Activated T-helper 2 cell treated with anti-CD3 and anti-CD28 coated beads, Interferon-gamma antibody, Interleukin-2, Interleukin-4, amounts not matched to agents 10 μg/mL and 5 μg/mL and 100 μg/mL, durations not matched to agents 14 hours and 24 hours and 36 hours (primary cell): ENCODE measurements at regions of chr15 and their contacts with region 1.

Region 1: GRCh38 chr15:69713726-69714559 is 261.3 kb downstream of the RPLP1 start:
- DNase-seq: peak; percentile 83
- H3K4me3 Mint-ChIP-seq: no peak overlapping the region
- H3K27ac Mint-ChIP-seq: peak overlapping the region; percentile 68
- H3K4me1 Mint-ChIP-seq: peaks cover 59% of the 10 kb centered on the region
- H3K27me3 Mint-ChIP-seq: peaks cover 5% of the 10 kb centered on the region

Region 2: GRCh38 chr15:69468241-69469121 is 245.5 kb before region 1 on chr15:
- intact Hi-C with region 1: loop called (anchors 1 kb)
- DNase-seq: peak; percentile 78
- H3K4me3 Mint-ChIP-seq: peak overlapping the region; percentile 5
- H3K27ac Mint-ChIP-seq: peak overlapping the region; percentile 75
- H3K4me1 Mint-ChIP-seq: peaks cover 22% of the 10 kb centered on the region
- H3K27me3 Mint-ChIP-seq: peaks cover 30% of the 10 kb centered on the region

Region 3: GRCh38 chr15:69679623-69680228 is 34.2 kb before region 1 on chr15:
- intact Hi-C with region 1: loop called (anchors 5 kb)
- DNase-seq: peak; percentile 23
- H3K4me3 Mint-ChIP-seq: no peak overlapping the region
- H3K27ac Mint-ChIP-seq: peak overlapping the region; percentile 38
- H3K4me1 Mint-ChIP-seq: peaks cover 32% of the 10 kb centered on the region
- H3K27me3 Mint-ChIP-seq: peaks cover 19% of the 10 kb centered on the region

Region 4: DNA sequence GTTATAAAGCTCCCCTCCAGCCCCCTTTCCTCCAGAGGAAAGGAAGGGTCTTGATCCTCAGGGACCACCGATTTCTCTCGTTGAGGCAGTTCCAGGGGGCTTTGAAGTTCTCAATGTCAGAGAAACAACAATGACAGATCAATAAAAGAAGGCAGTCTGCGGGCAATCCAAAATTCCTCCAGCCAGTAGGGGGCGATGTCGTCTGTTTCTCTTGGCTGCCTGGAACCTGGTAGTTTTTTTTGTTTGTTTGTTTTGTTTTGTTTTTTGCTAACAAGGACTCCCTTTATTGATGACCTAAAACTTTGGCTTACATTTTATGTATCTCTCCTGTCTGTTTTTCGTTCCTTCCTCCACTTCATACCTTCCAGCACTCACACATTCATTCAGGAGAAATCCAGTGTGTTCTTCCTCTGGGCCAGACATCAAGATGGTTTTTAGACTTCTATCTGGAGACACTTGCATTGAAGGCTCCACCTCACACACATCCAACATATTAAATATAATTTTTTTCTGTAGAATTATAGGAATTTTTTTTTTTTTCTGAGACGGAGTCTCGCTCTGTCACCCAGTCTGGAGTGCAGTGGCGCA is 15.3 kb after region 1 on chr15:
- intact Hi-C with region 1: no loop called
- DNase-seq: peak; percentile 51
- H3K4me3 Mint-ChIP-seq: no peak overlapping the region
- H3K27ac Mint-ChIP-seq: no peak overlapping the region
- H3K4me1 Mint-ChIP-seq: peaks cover 33% of the 10 kb centered on the region
- H3K27me3 Mint-ChIP-seq: peaks cover 22% of the 10 kb centered on the region

Region 5: GRCh38 chr15:69749797-69750196 is 35.9 kb after region 1 on chr15:
- intact Hi-C with region 1: no loop called
- DNase-seq: no peak
- H3K4me3 Mint-ChIP-seq: no peak overlapping the region
- H3K27ac Mint-ChIP-seq: no peak overlapping the region
- H3K4me1 Mint-ChIP-seq: peaks cover 44% of the 10 kb centered on the region
- H3K27me3 Mint-ChIP-seq: peaks cover 7% of the 10 kb centered on the region

Region 6: GRCh38 chr15:69760890-69761568 is 47.1 kb after region 1 on chr15:
- intact Hi-C with region 1: loop called (anchors 1 kb)
- DNase-seq: peak; percentile 85
- H3K4me3 Mint-ChIP-seq: peak overlapping the region; percentile 37
- H3K27ac Mint-ChIP-seq: peak overlapping the region; percentile 92
- H3K4me1 Mint-ChIP-seq: peaks cover 65% of the 10 kb centered on the region
- H3K27me3 Mint-ChIP-seq: peaks cover 6% of the 10 kb centered on the region

Region 7: GRCh38 chr15:69841113-69841828 is 127.3 kb after region 1 on chr15:
- intact Hi-C with region 1: no loop called
- DNase-seq: no peak
- H3K4me3 Mint-ChIP-seq: no peak overlapping the region
- H3K27ac Mint-ChIP-seq: no peak overlapping the region
- H3K4me1 Mint-ChIP-seq: no peaks in the 10 kb centered on the region
- H3K27me3 Mint-ChIP-seq: peaks cover 2% of the 10 kb centered on the region

Region 8: GRCh38 chr15:69869881-69870505 is 156.1 kb after region 1 on chr15:
- intact Hi-C with region 1: no loop called
- DNase-seq: no peak
- H3K4me3 Mint-ChIP-seq: no peak overlapping the region
- H3K27ac Mint-ChIP-seq: no peak overlapping the region
- H3K4me1 Mint-ChIP-seq: no peaks in the 10 kb centered on the region
- H3K27me3 Mint-ChIP-seq: peaks cover 18% of the 10 kb centered on the region

Region 9: DNA sequence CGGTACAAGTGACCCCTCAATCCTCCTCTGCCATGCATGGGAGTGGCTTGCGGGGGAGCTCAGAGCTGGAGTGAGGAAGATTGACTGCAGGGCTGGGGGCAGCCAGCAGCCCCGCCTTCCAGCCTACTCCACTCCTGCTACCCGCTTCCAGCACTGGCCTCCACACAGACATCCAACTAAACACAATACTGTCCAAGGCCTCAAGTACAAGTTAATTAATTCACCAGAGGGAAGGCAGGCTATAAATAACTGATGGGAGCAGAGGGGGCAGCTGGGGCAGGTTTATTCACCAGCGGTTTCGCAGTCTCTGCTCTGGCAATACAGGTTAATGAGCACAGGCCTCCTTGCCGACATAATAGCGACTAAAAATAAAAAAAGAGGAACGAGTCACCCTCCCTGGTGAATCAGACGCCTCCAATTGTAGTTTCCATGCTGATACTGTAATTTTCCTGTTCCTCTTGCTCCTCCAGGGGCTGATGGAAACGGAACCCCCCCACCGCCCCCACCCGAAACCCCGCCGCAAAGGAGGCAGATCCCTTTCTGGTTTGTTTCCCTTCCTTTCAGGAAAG is 550.2 kb after region 1 on chr15:
- intact Hi-C with region 1: loop called (anchors 10 kb)
- DNase-seq: no peak
- H3K4me3 Mint-ChIP-seq: no peak overlapping the region
- H3K27ac Mint-ChIP-seq: no peak overlapping the region
- H3K4me1 Mint-ChIP-seq: peaks cover 25% of the 10 kb centered on the region
- H3K27me3 Mint-ChIP-seq: peaks cover 49% of the 10 kb centered on the region